CD4-positive, alpha-beta memory T cell (primary cell): ENCODE measurements at regions of chr11 and their contacts with region 1.

Region 1: GRCh38 chr11:95705485-95706124 is 84.0 kb downstream of the FAM76B start:
- DNase-seq: peak; percentile 84 to 87 (median 85)
- H3K4me3 ChIP-seq: no peak overlapping the region
- H3K4me3 Mint-ChIP-seq: no peak overlapping the region
- H3K27ac ChIP-seq: no peak overlapping the region
- H3K27ac Mint-ChIP-seq: no peak overlapping the region
- H3K4me1 ChIP-seq: peaks cover 48% of the 10 kb centered on the region
- H3K4me1 Mint-ChIP-seq: peaks cover 6 to 10% (median 9%) of the 10 kb centered on the region in 4 donors
- H3K27me3 ChIP-seq: no peaks in the 10 kb centered on the region
- H3K27me3 Mint-ChIP-seq: peaks cover 0 to 3% of the 10 kb centered on the region in 2 donors

Region 2: GRCh38 chr11:95067039-95067840 is 638.4 kb before region 1 on chr11:
- CTCF ChIA-PET with region 1: interaction called, 10 read pairs
- POLR2A ChIA-PET with region 1: interaction called, 5 read pairs
- intact Hi-C with region 1: loop called (anchors 5 kb)
- DNase-seq: peak; percentile 72 to 80 (median 78)
- H3K4me3 ChIP-seq: peak overlapping the region; percentile 92 to 96
- H3K4me3 Mint-ChIP-seq: peak overlapping the region; percentile 94 to 98 (median 96)
- H3K27ac ChIP-seq: peak overlapping the region; percentile 95
- H3K27ac Mint-ChIP-seq: peak overlapping the region; percentile 94 to 98 (median 96)
- H3K4me1 ChIP-seq: peaks cover 32% of the 10 kb centered on the region
- H3K4me1 Mint-ChIP-seq: peaks cover 20 to 35% (median 29%) of the 10 kb centered on the region in 4 donors
- H3K27me3 ChIP-seq: no peaks in the 10 kb centered on the region
- H3K27me3 Mint-ChIP-seq: peaks cover 0 to 3% of the 10 kb centered on the region in 2 donors

Region 3: DNA sequence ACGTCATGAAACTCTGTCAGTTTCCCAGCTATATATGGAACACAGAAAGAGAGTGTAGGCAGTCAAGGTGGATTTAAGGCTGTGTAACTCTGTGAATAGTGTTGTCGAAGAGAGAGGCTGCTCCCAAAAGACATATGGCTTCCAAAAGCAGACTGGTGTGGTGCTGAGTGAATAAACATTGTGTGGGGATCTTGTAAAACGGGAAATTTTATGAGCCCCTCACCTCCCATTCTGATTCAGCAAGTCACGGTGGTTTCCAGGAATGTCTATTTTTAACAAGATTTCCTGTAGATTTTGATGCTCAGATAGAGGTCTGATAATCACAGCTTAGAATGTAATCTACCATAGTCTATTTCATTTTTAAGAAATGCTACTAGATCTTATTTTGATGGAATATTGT is 542.5 kb before region 1 on chr11:
- CTCF ChIA-PET with region 1: interaction called, 446 read pairs
- POLR2A ChIA-PET with region 1: interaction called, 5 read pairs
- intact Hi-C with region 1: no loop called
- DNase-seq: no peak
- H3K4me3 ChIP-seq: no peak overlapping the region
- H3K4me3 Mint-ChIP-seq: peak overlapping the region in 1 of 8 donors; percentile 14
- H3K27ac ChIP-seq: no peak overlapping the region
- H3K27ac Mint-ChIP-seq: peak overlapping the region in 4 of 7 donors; percentile 6 to 78 (median 50)
- H3K4me1 ChIP-seq: peaks cover 16% of the 10 kb centered on the region
- H3K4me1 Mint-ChIP-seq: peaks cover 19 to 35% (median 22%) of the 10 kb centered on the region in 4 donors
- H3K27me3 ChIP-seq: no peaks in the 10 kb centered on the region
- H3K27me3 Mint-ChIP-seq: no peaks in the 10 kb centered on the region

Region 4: DNA sequence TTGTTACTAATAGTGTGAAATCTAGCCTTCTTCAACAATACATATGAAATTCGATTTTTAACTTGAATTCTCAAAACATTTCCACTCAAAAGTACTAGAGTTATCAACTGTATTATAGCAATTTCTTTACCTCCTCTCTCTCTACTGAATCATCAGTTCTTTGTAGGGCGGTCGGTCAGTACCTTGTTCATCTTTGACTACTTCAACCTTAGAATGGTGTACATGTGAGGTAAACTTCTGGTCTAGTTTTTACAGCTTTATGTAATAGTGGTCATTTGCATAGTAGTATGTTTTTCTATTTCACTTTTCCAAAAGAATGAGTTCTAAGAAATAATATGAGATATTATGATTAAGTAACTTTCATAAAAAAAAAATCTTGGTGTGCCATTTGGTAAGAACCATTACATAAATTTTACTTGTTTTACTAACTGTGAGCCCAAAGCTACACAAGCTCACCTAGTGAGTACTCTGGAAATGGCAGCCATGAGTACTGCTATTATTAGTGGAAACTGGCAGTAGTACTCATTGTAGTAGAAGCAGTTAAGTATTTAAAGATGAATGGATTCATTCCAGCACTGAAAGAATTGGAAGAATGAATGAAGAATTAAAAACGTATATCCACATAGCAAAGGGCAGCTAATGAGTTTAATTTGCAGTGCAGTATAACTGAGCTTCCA is 504.7 kb before region 1 on chr11:
- CTCF ChIA-PET with region 1: interaction called, 17 read pairs
- POLR2A ChIA-PET with region 1: no interaction called
- intact Hi-C with region 1: no loop called
- DNase-seq: no peak
- H3K4me3 ChIP-seq: no peak overlapping the region
- H3K4me3 Mint-ChIP-seq: no peak overlapping the region
- H3K27ac ChIP-seq: no peak overlapping the region
- H3K27ac Mint-ChIP-seq: no peak overlapping the region
- H3K4me1 ChIP-seq: peaks cover 14% of the 10 kb centered on the region
- H3K4me1 Mint-ChIP-seq: peaks cover 34 to 68% (median 42%) of the 10 kb centered on the region in 4 donors
- H3K27me3 ChIP-seq: no peaks in the 10 kb centered on the region
- H3K27me3 Mint-ChIP-seq: no peaks in the 10 kb centered on the region

Region 5: DNA sequence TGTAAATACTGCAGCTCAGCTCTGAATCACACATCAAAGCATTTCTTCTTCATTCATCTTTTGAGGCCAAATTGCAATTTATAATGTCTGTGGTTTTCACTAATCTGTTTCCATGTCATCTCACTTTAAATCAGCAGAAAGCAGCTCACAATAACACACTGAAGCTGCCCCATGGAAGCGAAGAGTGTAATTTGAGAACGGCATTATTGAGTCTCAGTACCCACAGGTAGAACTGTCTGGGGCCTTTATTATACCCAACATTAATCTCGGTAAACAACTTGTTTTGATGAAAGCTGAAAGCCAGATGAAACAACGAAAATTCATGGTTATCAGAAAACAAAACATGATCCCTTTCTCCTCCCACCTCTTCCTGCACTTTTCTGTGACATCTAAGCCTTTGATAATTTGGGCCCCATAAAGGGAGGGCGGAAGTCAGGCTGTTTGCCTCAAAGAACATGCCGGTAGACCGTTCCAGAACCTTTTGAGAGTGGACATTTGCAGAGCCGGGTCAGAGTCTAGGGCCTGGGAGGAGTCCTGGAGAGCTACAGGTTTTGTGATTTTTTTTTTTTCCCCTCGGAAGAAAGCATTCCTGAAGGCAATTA is 406.4 kb before region 1 on chr11:
- CTCF ChIA-PET with region 1: interaction called, 14 read pairs
- POLR2A ChIA-PET with region 1: no interaction called
- intact Hi-C with region 1: no loop called
- DNase-seq: peak in 4 of 5 donors; percentile 25 to 30 (median 29)
- H3K4me3 ChIP-seq: no peak overlapping the region
- H3K4me3 Mint-ChIP-seq: peak overlapping the region; percentile 39 to 72 (median 66)
- H3K27ac ChIP-seq: no peak overlapping the region
- H3K27ac Mint-ChIP-seq: peak overlapping the region; percentile 19 to 90 (median 55)
- H3K4me1 ChIP-seq: peaks cover 20% of the 10 kb centered on the region
- H3K4me1 Mint-ChIP-seq: peaks cover 26 to 31% (median 26%) of the 10 kb centered on the region in 4 donors
- H3K27me3 ChIP-seq: no peaks in the 10 kb centered on the region
- H3K27me3 Mint-ChIP-seq: no peaks in the 10 kb centered on the region

Region 6: GRCh38 chr11:95536047-95536690 is 169.4 kb before region 1 on chr11:
- CTCF ChIA-PET with region 1: interaction called, 11 read pairs
- POLR2A ChIA-PET with region 1: no interaction called
- intact Hi-C with region 1: no loop called
- DNase-seq: no peak
- H3K4me3 ChIP-seq: no peak overlapping the region
- H3K4me3 Mint-ChIP-seq: no peak overlapping the region
- H3K27ac ChIP-seq: no peak overlapping the region
- H3K27ac Mint-ChIP-seq: no peak overlapping the region
- H3K4me1 ChIP-seq: no peaks in the 10 kb centered on the region
- H3K4me1 Mint-ChIP-seq: peaks cover 0 to 1% (median 0%) of the 10 kb centered on the region in 4 donors
- H3K27me3 ChIP-seq: no peaks in the 10 kb centered on the region
- H3K27me3 Mint-ChIP-seq: no peaks in the 10 kb centered on the region

Region 7: DNA sequence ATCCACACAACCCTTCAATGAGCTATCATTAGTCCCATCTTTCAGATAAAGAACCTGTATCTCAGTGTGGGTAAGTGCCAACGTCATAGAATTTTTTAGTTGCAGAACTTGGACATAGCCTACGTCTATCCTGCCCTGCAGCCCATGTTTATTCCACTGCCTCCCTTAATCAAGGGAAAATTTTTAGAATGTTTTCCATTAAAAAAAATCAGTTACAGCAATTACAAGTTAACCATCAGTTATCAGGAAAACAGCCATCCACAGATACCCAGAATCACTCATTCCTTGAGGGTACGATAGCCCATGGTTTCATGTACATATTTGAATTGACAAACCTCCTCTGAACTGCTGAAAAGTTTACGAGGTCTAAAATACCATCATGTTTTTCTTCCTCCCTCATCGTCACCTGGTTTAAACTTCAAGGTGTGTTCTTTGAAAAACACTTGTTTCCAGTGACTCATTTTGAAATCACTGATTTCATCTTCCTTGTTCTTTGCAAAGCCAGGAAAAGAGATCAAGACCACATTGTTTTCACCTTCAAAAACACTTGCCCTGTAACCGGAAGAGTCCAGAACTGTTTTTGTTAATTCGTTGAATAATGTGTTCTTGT is 16.9 kb before region 1 on chr11:
- CTCF ChIA-PET with region 1: interaction called, 103 read pairs
- POLR2A ChIA-PET with region 1: interaction called, 78 read pairs
- intact Hi-C with region 1: loop called (anchors 2 kb)
- DNase-seq: peak; percentile 65 to 69 (median 66)
- H3K4me3 ChIP-seq: peak overlapping the region in 1 of 2 donors; percentile 16
- H3K4me3 Mint-ChIP-seq: peak overlapping the region in 1 of 8 donors; percentile 1
- H3K27ac ChIP-seq: peak overlapping the region; percentile 41
- H3K27ac Mint-ChIP-seq: no peak overlapping the region
- H3K4me1 ChIP-seq: peaks cover 80% of the 10 kb centered on the region
- H3K4me1 Mint-ChIP-seq: peaks cover 16 to 25% (median 23%) of the 10 kb centered on the region in 4 donors
- H3K27me3 ChIP-seq: no peaks in the 10 kb centered on the region
- H3K27me3 Mint-ChIP-seq: no peaks in the 10 kb centered on the region

Region 8: GRCh38 chr11:96054870-96055705 is 349.5 kb after region 1 on chr11:
- CTCF ChIA-PET with region 1: no interaction called
- POLR2A ChIA-PET with region 1: no interaction called
- intact Hi-C with region 1: no loop called
- DNase-seq: peak in 4 of 5 donors; percentile 31 to 41 (median 36)
- H3K4me3 ChIP-seq: no peak overlapping the region
- H3K4me3 Mint-ChIP-seq: no peak overlapping the region
- H3K27ac ChIP-seq: no peak overlapping the region
- H3K27ac Mint-ChIP-seq: peak overlapping the region in 5 of 7 donors; percentile 19 to 81 (median 65)
- H3K4me1 ChIP-seq: no peaks in the 10 kb centered on the region
- H3K4me1 Mint-ChIP-seq: peaks cover 23 to 40% (median 39%) of the 10 kb centered on the region in 4 donors
- H3K27me3 ChIP-seq: no peaks in the 10 kb centered on the region
- H3K27me3 Mint-ChIP-seq: no peaks in the 10 kb centered on the region